A549 (cell line): ENCODE measurements at regions of chr10 and their contacts with region 1.

Region 1: GRCh38 chr10:26881600-26882331 is 21.0 kb upstream of the ABI1 start:
- DNase-seq: peak; percentile 55 to 77
- ATAC-seq: peak; percentile 91 to 97
- H3K4me3 ChIP-seq: no peak overlapping the region
- H3K27ac ChIP-seq: no peak overlapping the region
- H3K4me1 ChIP-seq: 0 out of 3 replicates have a peak, but pooled peaks cover 3% of the 10 kb centered on the region
- CTCF ChIP-seq: peak; percentile 90
- EP300 ChIP-seq: no peak
- POLR2A ChIP-seq: no peak
- RAD21 ChIP-seq: peak; percentile 92 to 95

Region 2: DNA sequence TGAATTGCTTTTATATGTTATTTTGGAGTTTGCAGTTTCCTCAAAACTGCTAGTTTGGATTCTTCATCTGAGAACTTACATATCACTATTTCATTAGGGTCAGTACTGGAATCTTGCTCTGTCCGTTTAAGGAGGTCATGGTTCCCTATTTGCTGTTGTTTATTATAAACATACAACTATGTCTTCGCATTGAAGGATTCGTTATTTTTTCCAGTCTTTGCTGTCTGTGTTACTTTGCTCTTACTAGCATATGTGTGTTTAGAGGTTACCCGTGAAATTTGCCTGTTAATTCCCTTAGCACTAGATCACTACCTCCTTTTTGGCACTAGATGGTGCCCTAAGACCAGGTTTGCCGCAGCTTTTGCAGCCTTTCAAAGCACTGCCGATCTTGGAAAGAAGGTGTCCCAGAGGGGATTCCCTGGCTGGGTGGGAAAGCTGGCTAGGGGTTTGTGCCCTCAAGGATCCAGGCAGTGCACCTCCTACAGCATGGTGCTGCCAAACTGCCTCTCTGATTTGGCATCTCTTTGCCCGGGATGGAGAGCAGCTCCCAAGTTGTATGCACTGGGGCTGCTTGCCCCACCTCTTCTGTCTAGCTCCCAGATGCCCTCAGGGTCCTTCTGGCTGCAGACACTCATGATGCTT is 546.7 kb before region 1 on chr10:
- CTCF ChIA-PET with region 1: interaction called, 15 read pairs
- POLR2A ChIA-PET with region 1: no interaction called
- DNase-seq: peak; percentile 54 to 81
- ATAC-seq: peak; percentile 96 to 99
- H3K4me3 ChIP-seq: no peak overlapping the region
- H3K27ac ChIP-seq: peak overlapping the region; percentile 60 to 89
- H3K4me1 ChIP-seq: peaks cover 5% of the 10 kb centered on the region; the same call in 1 of the 3 replicates
- CTCF ChIP-seq: peak; percentile 94
- EP300 ChIP-seq: no peak
- POLR2A ChIP-seq: no peak
- RAD21 ChIP-seq: peak; percentile 99

Region 3: DNA sequence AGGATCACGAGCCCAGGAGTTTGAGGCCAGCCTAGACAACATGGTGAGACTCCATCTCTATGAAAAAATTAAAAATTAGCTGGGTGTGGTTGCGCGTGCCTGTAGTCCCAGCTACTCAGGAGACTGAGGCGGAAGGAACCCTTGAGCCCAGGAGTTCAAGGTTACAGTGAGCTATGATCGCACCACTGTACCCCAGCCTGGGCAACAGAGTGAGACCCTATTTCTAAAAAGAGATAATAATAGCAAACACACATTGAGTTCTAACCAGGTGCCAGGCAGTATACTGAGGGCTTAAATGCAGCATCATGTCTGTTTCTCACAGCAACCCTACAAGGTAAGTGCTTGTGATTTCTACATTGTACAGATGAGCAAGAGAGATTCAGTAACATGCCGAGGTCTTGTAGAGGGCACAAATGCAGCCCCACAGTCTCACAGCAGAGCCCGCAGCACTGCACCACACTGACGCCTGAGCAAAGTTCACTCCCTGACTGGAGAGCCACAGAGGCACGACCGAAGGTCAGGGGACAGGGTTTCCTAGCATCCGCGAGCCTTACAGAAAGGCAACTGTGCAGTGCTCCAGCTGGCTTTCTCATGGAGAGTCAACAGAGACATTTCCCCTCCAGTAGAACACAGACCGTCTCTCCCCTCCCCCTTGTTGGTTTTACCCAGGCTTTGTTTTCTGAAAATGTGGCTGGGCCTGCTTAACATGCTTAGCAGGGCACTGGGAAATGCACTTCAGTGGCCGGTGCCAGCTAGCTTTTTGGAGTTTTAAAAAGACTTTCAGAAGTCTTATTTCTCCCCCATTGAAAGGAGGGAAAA is 147.8 kb before region 1 on chr10:
- CTCF ChIA-PET with region 1: interaction called, 160 read pairs
- POLR2A ChIA-PET with region 1: no interaction called
- DNase-seq: no peak
- ATAC-seq: no peak
- H3K4me3 ChIP-seq: no peak overlapping the region
- H3K27ac ChIP-seq: no peak overlapping the region
- H3K4me1 ChIP-seq: 0 out of 3 replicates have a peak, but pooled peaks cover 5% of the 10 kb centered on the region
- CTCF ChIP-seq: no peak
- EP300 ChIP-seq: no peak
- POLR2A ChIP-seq: no peak
- RAD21 ChIP-seq: no peak

Region 4: DNA sequence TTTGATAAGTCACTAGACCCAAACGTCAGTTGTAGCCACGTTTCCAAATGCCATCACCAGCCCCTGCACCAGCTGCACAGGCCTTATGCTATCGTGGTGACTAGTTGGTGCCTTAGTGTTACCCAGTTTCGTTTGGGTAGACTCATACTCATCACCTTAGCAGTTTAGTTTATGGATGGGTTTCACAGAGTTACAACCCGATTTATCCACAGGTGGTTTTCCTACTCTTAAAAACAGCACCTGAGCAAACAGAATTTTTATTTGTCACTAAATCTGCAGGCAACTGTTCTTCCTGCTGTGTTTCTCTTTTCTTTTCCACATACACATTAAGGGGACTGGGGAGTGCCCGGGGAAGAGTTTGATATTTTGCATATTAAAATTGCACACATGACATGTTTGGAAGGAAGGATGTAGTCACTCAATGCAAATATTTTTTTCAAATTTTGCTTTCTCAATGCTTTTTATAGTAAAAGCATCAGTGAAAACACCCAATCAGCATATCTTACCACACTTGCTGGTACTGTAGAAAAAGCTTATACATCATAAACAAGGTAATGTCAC is 142.6 kb before region 1 on chr10:
- CTCF ChIA-PET with region 1: interaction called, 16 read pairs
- POLR2A ChIA-PET with region 1: no interaction called
- DNase-seq: no peak
- ATAC-seq: no peak
- H3K4me3 ChIP-seq: no peak overlapping the region
- H3K27ac ChIP-seq: no peak overlapping the region
- H3K4me1 ChIP-seq: no peaks in the 10 kb centered on the region
- CTCF ChIP-seq: no peak
- EP300 ChIP-seq: no peak
- POLR2A ChIP-seq: no peak
- RAD21 ChIP-seq: no peak

Region 5: DNA sequence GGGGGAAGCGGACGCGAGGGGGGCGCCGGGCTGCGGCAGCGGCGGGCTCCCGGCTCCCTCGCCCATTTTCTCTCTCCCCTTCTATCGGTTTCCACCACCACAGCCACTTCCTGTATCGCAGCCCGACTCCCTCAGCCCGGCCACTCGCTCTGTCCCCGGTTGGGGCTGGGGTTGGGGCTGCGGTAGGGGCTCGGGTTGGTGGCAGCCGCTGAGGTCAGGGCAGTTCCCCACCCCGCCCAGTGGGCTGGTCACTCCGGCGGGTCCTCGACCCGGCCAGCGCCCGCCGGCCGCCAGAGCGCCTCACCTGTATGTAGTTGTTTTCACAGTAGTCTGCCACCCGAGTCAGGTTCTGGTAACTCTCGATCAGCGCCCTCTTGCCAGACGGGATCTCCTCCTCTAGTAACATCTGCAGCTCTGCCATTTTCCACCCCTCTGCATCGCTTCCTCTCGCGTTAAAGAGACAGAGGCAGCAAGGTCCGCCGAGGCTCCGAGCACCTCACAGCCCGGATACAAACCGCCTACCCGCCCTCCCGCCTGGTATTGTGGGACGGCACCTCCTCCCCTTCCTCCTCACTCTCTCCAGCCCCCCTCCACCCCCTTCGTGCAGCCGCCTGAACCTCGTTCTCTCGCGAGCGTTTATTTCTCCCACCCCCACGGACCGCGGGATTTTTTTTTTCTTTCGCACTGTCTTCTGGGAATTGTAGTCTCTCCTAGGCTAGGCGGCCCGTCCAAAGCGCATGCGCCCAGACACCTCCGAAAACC is 21.1 kb before region 1 on chr10 and contains the start of gene ABI1:
- CTCF ChIA-PET with region 1: interaction called, 15 read pairs
- POLR2A ChIA-PET with region 1: no interaction called
- DNase-seq: peak; percentile 77 to 98
- ATAC-seq: peak; percentile 96 to 97
- H3K4me3 ChIP-seq: peak within 1 kb of the TSS; percentile 96
- H3K27ac ChIP-seq: peak within 1 kb of the TSS; percentile 74 to 94
- H3K4me1 ChIP-seq: peaks cover 16% of the 10 kb centered on the region
- CTCF ChIP-seq: no peak
- EP300 ChIP-seq: no peak
- POLR2A ChIP-seq: peak; percentile 87
- RAD21 ChIP-seq: no peak
- polyA plus RNA-seq, gene ABI1: 56.3 and 67.6 TPM in 2 replicates

Region 6: GRCh38 chr10:26869528-26869927 is 12.2 kb before region 1 on chr10:
- CTCF ChIA-PET with region 1: interaction called, 19 read pairs
- POLR2A ChIA-PET with region 1: no interaction called
- DNase-seq: no peak
- ATAC-seq: no peak
- H3K4me3 ChIP-seq: no peak overlapping the region
- H3K27ac ChIP-seq: no peak overlapping the region
- H3K4me1 ChIP-seq: no peaks in the 10 kb centered on the region
- CTCF ChIP-seq: no peak
- EP300 ChIP-seq: no peak
- POLR2A ChIP-seq: no peak
- RAD21 ChIP-seq: no peak